ENCODE measurements at regions of chr1 and their contacts with region 1.

Region 1: DNA sequence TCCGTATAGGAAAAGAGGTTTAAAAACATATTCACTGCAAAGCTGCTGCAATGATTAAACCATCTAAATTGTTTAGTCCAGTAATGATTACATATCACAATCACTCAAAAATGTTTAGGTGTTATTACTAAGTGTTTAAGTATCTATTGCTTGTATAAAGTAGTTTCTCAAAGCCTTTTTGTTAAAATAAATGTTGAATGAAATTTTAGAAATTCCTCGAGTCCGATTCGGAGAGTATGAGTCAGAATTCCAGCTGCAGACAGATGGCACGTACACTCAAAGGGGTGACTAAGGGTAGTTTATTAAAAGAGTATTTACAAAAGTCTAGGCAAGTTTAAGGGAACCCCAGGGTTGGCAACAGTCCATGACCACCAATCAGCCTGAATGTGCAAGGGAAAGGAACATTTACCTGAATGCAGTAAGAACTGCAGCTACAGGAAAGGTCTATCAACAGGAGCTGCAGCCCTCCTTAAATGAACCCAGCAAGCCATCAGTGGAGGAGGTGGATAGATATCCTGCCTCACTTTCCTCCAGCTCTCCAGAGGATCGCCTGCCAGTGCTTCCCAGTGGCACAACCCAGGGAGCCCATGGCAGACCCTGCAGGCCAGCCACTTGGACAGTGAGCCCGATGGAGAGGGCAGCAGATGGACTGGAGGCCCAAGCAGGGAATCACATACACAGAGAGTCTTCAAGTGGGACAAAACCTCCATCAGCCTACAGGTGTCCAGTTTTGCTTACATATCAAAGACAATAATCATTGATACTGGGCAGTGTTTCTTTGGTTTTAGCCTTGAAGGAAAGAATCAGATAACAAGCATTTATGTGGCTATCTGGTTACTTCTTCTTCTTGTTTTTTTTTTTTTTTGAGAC is 92.1 kb upstream of the SLC44A3 start:
- DNase-seq: peak; percentile 83 to 100
- H3K4me3 ChIP-seq: peak overlapping the region; percentile 1; the same call in 1 of the 2 replicates
- H3K27ac ChIP-seq: peak overlapping the region; percentile 85
- H3K4me1 ChIP-seq: peaks cover 44% of the 10 kb centered on the region
- H3K27me3 ChIP-seq: no peaks in the 10 kb centered on the region
- CTCF ChIP-seq: no peak

Region 2: DNA sequence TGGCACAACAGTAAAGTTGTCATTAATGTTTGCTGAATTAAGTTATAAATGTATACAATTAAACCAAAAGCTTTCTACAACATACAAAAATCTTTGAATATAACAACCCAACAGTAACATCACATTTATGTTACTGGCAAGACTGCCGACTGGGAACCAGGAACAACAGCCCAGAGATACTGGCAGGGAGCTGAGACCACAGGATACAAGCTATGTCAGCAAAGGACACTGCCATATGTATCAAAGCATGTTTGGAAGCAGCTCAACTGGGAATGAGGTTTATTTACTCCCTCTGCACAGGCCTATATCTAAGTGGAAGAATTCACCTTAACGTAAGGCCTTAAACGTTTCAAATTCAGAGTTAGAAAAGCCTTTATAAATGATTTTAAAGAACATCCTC is 541.1 kb before region 1 on chr1:
- CTCF ChIA-PET with region 1: no interaction called
- POLR2A ChIA-PET with region 1: no interaction called
- intact Hi-C with region 1: no loop called
- DNase-seq: no peak
- H3K4me3 ChIP-seq: no peak overlapping the region
- H3K27ac ChIP-seq: peak overlapping the region; percentile 40
- H3K4me1 ChIP-seq: no peaks in the 10 kb centered on the region
- H3K27me3 ChIP-seq: no peaks in the 10 kb centered on the region
- CTCF ChIP-seq: no peak

Region 3: GRCh38 chr1:94579876-94580294 is 148.2 kb before region 1 on chr1:
- CTCF ChIA-PET with region 1: no interaction called
- POLR2A ChIA-PET with region 1: interaction called, 3 read pairs
- intact Hi-C with region 1: loop called (anchors 1 kb)
- DNase-seq: peak; percentile 88 to 98
- H3K4me3 ChIP-seq: no peak overlapping the region
- H3K27ac ChIP-seq: peak overlapping the region; percentile 66
- H3K4me1 ChIP-seq: peaks cover 35% of the 10 kb centered on the region
- H3K27me3 ChIP-seq: no peaks in the 10 kb centered on the region
- CTCF ChIP-seq: no peak

Region 4: DNA sequence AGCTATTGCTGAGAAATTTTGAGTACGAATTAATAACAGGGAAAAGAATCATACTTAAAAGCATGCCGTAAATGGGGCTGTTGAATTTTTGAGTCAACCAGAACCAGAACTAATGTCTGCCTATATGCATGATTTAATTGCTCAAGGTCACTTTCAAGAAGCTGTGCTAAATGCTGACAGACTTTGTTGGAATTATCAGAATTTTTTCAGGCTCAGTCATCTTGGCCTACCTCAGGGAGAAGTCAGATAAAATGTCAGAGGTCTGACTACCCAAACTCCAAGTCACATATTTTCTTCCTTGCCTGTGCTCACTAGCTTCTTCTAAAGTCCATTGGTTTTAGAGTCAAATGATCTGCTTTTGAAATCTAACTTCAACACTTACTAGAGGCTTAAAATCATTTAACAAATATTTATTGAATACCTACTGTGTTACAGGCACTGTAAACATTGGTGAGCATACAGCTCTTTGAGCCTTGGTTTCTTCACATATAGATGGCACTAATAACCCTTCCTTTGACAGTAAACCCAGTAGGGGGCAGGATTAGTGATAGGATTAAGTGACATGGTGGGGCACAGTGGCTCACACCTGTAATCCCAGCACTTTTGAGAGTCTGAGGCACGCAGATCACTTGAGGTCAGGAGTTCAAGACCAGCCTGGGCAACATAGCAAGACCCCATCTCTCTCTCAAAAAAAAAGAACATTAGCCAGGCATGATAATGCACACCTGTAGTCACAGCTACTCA is 29.1 kb before region 1 on chr1:
- CTCF ChIA-PET with region 1: no interaction called
- POLR2A ChIA-PET with region 1: no interaction called
- intact Hi-C with region 1: no loop called
- DNase-seq: no peak
- H3K4me3 ChIP-seq: no peak overlapping the region
- H3K27ac ChIP-seq: peak overlapping the region; percentile 33; the same call in 1 of the 2 replicates
- H3K4me1 ChIP-seq: peaks cover 16% of the 10 kb centered on the region
- H3K27me3 ChIP-seq: no peaks in the 10 kb centered on the region
- CTCF ChIP-seq: no peak

Region 5: DNA sequence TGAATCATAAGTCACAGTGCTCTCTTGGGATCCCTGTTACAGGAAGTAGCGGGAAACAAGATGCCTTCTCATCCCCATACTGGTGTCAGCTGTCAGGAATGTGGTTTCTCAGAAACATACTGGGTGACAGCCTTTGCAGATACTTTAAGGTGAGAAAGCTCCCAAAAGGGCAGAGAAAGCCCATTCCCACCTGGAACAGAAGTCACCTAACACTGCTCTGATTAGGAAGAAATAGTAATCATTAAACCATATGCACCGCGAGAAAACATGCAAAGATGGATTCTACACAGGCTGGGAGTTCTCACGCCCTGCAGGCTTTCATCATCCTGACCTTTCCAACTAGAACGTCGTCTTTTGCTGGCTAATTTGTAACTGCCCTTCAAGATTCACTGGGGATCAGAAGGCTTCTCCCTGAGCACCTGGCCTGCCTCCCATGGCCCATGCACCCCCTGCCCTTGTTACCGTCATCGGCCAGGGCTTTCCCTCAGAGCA is 45.9 kb after region 1 on chr1:
- CTCF ChIA-PET with region 1: no interaction called
- POLR2A ChIA-PET with region 1: interaction called, 4 read pairs
- intact Hi-C with region 1: loop called (anchors 1 kb)
- DNase-seq: peak; percentile 48 to 92
- H3K4me3 ChIP-seq: no peak overlapping the region
- H3K27ac ChIP-seq: peak overlapping the region; percentile 85
- H3K4me1 ChIP-seq: peaks cover 69% of the 10 kb centered on the region
- H3K27me3 ChIP-seq: no peaks in the 10 kb centered on the region
- CTCF ChIP-seq: no peak

Region 6: GRCh38 chr1:94783342-94784264 is 55.5 kb after region 1 on chr1:
- CTCF ChIA-PET with region 1: no interaction called
- POLR2A ChIA-PET with region 1: interaction called, 6 read pairs
- intact Hi-C with region 1: loop called (anchors 1 kb)
- DNase-seq: peak; percentile 87 to 94
- H3K4me3 ChIP-seq: peak overlapping the region; percentile 10; the same call in 1 of the 2 replicates
- H3K27ac ChIP-seq: peak overlapping the region; percentile 91
- H3K4me1 ChIP-seq: peaks cover 36% of the 10 kb centered on the region
- H3K27me3 ChIP-seq: no peaks in the 10 kb centered on the region
- CTCF ChIP-seq: no peak

Region 7: GRCh38 chr1:94792473-94793295 is 64.6 kb after region 1 on chr1:
- CTCF ChIA-PET with region 1: no interaction called
- POLR2A ChIA-PET with region 1: interaction called, 11 read pairs
- intact Hi-C with region 1: no loop called
- DNase-seq: peak in 1 of 2 experiments; percentile 70
- H3K4me3 ChIP-seq: no peak overlapping the region
- H3K27ac ChIP-seq: peak overlapping the region; percentile 35
- H3K4me1 ChIP-seq: peaks cover 27% of the 10 kb centered on the region
- H3K27me3 ChIP-seq: no peaks in the 10 kb centered on the region
- CTCF ChIP-seq: no peak

Region 8: GRCh38 chr1:95197616-95198252 is 469.7 kb after region 1 on chr1:
- CTCF ChIA-PET with region 1: no interaction called
- POLR2A ChIA-PET with region 1: no interaction called
- intact Hi-C with region 1: no loop called
- DNase-seq: no peak
- H3K4me3 ChIP-seq: no peak overlapping the region
- H3K27ac ChIP-seq: no peak overlapping the region
- H3K4me1 ChIP-seq: no peaks in the 10 kb centered on the region
- H3K27me3 ChIP-seq: no peaks in the 10 kb centered on the region
- CTCF ChIP-seq: no peak

Region 9: GRCh38 chr1:95247607-95248006 is 519.5 kb after region 1 on chr1:
- CTCF ChIA-PET with region 1: no interaction called
- POLR2A ChIA-PET with region 1: no interaction called
- intact Hi-C with region 1: no loop called
- DNase-seq: no peak
- H3K4me3 ChIP-seq: no peak overlapping the region
- H3K27ac ChIP-seq: no peak overlapping the region
- H3K4me1 ChIP-seq: no peaks in the 10 kb centered on the region
- H3K27me3 ChIP-seq: no peaks in the 10 kb centered on the region
- CTCF ChIP-seq: no peak